ENCODE measurements at regions of chr7 and their contacts with region 1.

Region 1: DNA sequence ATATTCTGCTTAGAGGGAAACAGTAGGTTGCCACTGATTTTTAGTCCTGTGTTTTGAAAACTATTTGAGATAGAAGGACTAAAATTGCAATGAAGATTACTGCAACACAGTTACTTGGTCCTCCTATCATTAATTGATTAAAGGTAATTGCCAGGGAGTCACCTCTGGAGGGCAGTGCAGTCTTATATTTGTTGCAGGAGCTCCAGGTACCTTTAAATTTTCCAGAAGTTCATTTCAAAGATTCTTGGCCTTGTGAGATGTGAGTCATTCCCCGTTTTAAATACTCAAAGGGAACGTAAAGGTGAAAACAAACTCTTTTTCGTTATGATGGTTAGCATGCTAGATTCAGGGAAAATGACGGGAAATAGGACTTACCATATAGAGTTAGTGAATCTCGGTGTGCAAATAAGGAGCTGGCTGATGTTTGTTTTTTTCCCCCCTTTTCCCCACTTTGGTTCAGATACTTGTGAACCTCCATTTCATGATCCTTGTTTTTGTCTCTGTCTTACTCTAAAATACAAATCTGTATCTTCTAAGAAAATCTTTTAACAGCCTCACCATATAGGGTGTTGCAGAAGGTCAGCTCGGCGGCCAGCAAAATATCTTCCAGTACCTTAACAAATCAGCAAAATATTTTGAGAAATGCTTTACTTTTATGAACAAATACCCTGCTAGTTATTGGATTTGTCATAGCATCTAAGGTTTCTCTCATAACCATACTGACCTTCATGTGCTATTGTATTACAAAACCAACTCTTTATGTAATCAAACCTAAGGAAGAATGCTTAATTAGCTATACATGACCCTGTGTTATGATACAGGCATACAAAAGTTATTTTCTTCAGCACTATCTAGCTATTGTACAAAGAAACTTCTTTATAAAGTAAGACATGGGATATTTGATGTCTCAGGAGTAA is 143.0 kb upstream of the HDAC9 start:
- H3K4me3 ChIP-seq: no peak overlapping the region
- H3K27ac ChIP-seq: no peak overlapping the region
- H3K4me1 ChIP-seq: peaks cover 2% of the 10 kb centered on the region; the same call in 1 of the 2 replicates
- CTCF ChIP-seq: no peak

Region 2: DNA sequence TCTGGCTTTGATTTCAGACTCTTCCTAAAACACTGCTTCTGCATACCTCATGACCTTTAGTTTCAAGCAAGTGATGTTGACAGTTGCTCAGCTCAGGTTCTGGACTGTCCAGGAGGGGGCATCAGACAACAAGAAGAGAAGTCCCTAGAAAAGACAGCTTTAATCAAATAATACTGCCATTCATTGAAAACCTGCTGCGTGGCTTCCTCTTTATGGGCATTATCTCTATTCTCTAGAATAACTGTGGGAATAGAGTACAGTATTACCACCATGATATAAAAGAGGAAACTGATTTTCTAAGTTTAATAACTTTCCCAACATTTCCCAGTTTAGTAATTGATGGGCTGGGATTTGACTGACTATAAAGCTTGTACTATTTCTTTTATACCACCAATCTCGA is 582.7 kb before region 1 on chr7:
- CTCF ChIA-PET with region 1: interaction called, 42 read pairs
- POLR2A ChIA-PET with region 1: no interaction called
- H3K4me3 ChIP-seq: no peak overlapping the region
- H3K27ac ChIP-seq: no peak overlapping the region
- H3K4me1 ChIP-seq: peaks cover 7% of the 10 kb centered on the region
- CTCF ChIP-seq: no peak

Region 3: DNA sequence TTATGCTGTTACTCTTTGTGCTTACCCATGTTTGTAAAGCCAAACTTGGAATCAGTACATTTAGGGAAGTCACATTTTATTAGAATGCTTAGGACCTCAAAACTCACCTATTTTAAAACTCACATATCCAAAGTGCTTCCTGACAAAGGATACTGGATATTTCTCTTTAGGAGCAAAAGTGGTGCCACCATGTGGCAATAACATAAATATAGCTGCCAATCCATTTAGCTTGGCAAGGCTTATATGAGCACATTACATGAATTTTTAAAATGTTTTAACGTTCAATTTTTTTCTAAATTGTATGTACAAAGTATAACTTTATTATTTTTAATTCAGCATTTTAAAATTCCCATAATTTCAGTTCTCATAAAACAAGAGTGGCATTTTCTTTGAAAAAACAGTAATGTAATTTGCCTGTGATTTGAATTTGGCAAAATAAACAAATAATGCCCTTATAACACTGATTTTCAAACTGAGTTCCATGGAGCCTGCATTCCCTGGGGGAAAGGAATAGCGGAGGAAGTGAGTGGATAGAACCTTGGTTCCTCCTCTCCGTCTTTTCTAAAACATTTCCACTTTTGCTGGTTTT is 218.4 kb after region 1 on chr7:
- CTCF ChIA-PET with region 1: interaction called, 36 read pairs
- POLR2A ChIA-PET with region 1: interaction called, 4 read pairs
- H3K4me3 ChIP-seq: no peak overlapping the region
- H3K27ac ChIP-seq: no peak overlapping the region
- H3K4me1 ChIP-seq: no peaks in the 10 kb centered on the region
- CTCF ChIP-seq: no peak

Region 4: DNA sequence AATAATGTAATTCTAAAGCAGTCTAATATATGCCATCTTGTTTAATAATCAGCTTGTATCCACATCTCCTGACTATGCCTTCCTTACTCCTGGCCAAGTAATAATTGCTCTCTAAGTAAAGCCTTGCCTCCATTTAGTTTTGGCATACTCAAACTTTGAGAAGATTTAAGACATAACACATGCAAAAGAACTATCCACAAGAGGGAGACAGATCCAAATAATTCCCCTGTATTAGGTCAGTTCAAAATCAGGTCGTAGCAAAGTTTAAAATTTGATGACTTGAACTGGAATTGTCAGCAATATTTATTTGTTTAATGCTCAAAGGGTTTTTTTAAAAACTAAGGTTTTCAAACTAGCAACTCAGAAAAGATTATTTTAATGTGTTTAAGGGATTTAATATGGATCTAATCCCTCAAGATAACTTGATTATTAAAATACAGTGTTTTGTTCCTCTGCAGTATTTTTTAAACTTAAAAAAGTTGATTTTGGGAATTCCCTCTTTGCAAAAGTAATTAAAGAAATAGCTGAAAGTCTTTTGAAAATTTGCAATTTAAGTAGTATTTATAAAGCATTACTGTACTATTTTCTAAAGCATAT is 238.2 kb after region 1 on chr7:
- CTCF ChIA-PET with region 1: interaction called, 11 read pairs
- POLR2A ChIA-PET with region 1: no interaction called
- H3K4me3 ChIP-seq: no peak overlapping the region
- H3K27ac ChIP-seq: no peak overlapping the region
- H3K4me1 ChIP-seq: no peaks in the 10 kb centered on the region
- CTCF ChIP-seq: no peak

Region 5: GRCh38 chr7:18610331-18610948 is 257.8 kb after region 1 on chr7:
- CTCF ChIA-PET with region 1: interaction called, 17 read pairs
- POLR2A ChIA-PET with region 1: no interaction called
- H3K4me3 ChIP-seq: no peak overlapping the region
- H3K27ac ChIP-seq: no peak overlapping the region
- H3K4me1 ChIP-seq: no peaks in the 10 kb centered on the region
- CTCF ChIP-seq: no peak

Region 6: DNA sequence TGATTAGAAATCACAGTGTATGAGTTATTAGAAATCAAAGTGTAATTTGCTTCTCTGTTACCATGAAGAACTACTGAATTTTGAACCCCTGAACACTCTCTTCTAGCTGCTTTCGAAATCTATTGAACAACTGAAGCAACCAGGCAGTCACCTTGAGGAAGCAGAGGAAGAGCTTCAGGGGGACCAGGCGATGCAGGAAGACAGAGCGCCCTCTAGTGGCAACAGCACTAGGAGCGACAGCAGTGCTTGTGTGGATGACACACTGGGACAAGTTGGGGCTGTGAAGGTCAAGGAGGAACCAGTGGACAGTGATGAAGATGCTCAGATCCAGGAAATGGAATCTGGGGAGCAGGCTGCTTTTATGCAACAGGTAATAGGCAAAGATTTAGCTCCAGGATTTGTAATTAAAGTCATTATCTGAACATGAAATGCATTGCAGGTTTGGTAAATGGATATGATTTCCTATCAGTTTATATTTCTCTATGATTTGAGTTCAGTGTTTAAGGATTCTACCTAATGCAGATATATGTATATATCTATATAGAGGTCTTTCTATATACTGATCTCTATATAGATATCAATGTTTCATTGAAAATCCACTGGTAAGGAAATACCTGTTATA is 313.6 kb after region 1 on chr7:
- CTCF ChIA-PET with region 1: interaction called, 27 read pairs
- POLR2A ChIA-PET with region 1: no interaction called
- H3K4me3 ChIP-seq: no peak overlapping the region
- H3K27ac ChIP-seq: no peak overlapping the region
- H3K4me1 ChIP-seq: no peaks in the 10 kb centered on the region
- CTCF ChIP-seq: peak; percentile 43

Region 7: GRCh38 chr7:19104811-19105210 is 752.2 kb after region 1 on chr7:
- CTCF ChIA-PET with region 1: no interaction called
- POLR2A ChIA-PET with region 1: interaction called, 12 read pairs
- H3K4me3 ChIP-seq: no peak overlapping the region
- H3K27ac ChIP-seq: no peak overlapping the region
- H3K4me1 ChIP-seq: no peaks in the 10 kb centered on the region
- CTCF ChIP-seq: no peak

Measured in HEK293 (cell line).